ENCODE measurements at regions of chr9 and their contacts with region 1.

Region 1: DNA sequence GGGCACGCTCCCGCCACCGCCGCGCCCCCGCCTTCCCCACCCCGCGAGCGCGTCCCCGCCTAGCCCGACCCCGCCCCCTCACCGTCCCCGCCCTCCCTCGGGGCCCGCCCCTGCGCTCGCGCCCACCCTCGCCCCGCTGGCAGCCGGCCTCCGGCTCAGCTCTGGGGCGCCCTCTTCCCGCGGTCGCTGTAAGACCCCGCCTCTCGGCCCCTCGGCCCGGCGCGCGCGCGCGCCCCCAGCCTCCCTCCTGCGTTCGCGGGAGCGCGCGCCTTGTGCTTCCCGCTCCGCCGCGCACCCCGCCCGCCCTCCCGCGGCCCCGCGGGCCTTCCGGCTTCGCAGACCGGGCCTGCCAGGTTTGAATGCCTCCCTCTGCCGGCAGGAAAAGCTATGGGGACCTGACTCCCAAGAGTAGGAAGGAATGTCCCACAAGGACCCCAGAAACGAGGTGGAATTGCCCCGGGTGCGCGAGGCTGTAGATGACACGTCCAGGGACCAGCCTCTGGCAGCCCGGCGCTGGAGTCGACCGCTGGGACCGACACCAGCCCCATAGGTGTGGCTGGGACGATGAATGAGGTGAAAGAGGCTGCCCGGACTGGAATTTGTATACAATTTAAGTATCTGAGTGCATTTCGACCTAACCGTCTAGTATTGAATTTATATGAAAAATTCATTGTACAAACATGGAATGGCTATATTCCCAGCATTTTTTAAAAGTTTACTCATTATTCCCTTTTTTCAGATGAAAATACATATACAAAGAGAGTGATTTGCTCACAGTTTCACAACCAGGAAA is 416 bp upstream of the PTBP3 start:
- DNase-seq: peak; percentile 96
- H3K4me3 ChIP-seq: peak overlapping the region; percentile 79 to 99 (median 94)
- H3K27ac ChIP-seq: peak overlapping the region; percentile 95 to 100 (median 99)
- H3K4me1 ChIP-seq: peaks cover 11 to 30% (median 25%) of the 10 kb centered on the region in 4 donors
- H3K27me3 ChIP-seq: no peaks in the 10 kb centered on the region
- CTCF ChIP-seq: peak; percentile 55 to 74 (median 69)
- EP300 ChIP-seq: no peak
- POLR2A ChIP-seq: no peak

Region 2: DNA sequence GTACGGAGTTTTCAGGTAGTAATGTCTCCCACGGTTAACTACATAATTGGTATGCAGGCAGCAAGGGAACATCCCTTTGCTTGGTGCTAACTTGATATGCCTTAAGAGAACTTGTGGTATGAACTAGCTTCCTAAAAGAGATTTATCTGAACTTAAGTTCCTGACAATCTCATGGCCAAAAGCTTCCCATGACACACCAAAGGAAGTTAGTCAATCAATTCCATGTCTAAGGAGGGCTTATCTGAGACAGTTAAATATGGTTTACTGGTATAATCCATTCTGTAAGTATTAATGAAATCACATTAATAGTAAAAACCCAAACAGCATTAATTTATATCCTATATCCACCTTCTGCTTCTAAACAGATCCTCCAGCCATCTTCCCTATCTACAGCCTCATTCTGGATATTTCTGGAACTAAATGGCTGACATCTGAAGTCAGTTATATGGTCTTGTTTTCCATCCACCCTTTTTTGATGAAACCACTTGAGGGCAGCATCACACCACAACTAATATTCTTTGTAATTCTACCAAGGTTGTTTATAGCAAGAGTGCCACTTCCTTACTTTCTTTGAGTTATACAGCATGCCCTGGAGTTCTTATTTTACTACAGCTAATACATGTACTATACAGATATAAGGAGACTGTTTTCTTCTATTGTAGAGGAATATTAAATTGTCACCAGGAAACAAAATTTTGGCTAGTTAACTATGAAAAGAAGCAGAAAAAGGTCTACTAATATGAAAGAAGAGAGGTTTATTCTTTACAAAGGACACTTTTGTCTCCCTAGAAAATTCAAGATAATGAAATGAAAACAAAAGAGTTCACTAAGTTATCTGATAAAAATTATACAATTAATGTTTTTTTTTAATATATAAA is 573.8 kb before region 1 on chr9:
- intact Hi-C with region 1: loop called (anchors 10 kb)
- DNase-seq: no peak
- H3K4me3 ChIP-seq: no peak overlapping the region
- H3K27ac ChIP-seq: no peak overlapping the region
- H3K4me1 ChIP-seq: peaks cover 0 to 8% (median 0%) of the 10 kb centered on the region in 4 donors
- H3K27me3 ChIP-seq: no peaks in the 10 kb centered on the region
- CTCF ChIP-seq: peak; percentile 67 to 73 (median 72)
- EP300 ChIP-seq: no peak
- POLR2A ChIP-seq: no peak

Region 3: DNA sequence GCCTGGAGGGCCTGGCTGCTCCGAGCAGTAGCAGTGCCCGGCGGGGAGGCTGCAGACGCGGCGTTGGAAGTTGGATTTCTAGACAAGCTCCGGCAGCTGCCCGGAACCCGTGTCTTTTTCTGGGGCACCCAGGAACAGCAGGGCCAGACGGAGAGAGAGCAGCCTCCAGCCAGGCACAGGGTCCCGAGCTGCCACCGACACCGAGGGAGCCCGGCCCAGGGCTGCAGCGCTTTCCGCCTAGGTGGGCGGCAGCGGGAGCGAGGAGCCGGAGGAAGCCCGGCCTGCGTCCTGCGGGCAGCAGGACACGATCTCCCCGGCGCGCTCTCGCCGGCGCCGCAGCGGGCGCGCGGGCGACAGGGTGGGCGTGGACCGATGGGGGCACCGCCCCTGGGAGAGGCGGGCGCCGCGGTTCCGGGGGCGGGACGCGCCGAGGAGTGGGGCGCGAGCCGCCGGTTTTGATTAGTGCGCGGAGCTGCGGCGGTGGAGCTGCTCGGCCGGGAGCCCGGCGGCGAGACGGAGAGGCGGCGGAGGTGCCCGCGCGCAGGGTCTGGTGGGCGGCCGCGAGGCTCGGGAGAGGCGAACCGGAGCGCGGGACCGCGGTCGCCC is 437.4 kb before region 1 on chr9 and contains the start of gene UGCG:
- intact Hi-C with region 1: loop called (anchors 5 kb)
- DNase-seq: peak; percentile 95
- H3K4me3 ChIP-seq: peak within 1 kb of the TSS; percentile 83 to 99 (median 94)
- H3K27ac ChIP-seq: peak within 1 kb of the TSS; percentile 94 to 99 (median 97)
- H3K4me1 ChIP-seq: peaks cover 42 to 46% (median 44%) of the 10 kb centered on the region in 4 donors
- H3K27me3 ChIP-seq: no peaks in the 10 kb centered on the region
- CTCF ChIP-seq: no peak
- EP300 ChIP-seq: no peak
- POLR2A ChIP-seq: peak; percentile 94
- total RNA-seq, gene UGCG: 24.5 to 87.8 (median 33.5) TPM

Region 4: DNA sequence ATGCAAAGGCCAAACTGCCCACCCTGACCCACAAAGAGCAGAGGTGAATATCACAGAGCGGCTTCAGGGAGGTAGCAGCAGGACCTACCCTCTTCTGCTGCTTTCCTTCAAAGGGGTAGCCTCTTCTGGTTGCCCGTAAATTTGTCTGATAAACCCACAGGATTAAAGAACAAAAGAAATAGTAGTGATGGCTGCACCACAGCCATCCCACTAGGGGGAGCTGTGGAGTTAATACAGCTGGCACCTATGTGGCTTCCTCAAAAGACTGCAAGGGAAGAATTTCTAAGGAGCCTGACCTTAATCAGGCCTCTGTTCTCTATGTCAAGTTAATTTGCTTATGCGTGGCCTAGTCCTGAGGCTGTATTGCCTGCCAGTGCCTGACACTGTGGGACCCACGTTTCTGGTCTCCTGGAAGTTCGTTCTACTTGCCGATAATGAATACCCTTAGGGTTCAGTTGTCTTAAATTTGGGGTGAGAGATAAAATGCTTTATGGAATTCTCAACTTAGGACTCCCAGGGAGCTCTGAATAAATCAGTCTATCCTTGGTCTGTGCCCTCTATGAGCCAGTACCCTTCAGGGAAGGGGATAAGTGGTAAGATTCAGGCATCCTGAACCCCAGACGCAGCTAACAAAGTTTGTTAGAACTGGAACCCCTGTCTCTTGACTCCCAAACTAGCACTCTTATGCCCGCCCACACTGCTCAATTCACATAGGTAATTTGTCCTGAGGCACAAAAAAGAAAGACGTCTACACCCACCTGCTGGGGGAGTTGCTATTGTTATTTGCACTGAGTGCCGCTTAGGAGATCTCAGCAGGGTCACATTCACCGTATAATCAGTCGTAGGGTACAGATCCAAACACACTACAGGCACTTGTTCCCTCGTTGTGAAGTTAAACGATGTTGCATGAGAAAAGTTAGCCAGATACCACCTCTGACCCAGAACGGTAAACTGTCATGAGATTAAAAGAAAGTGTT is 235.8 kb before region 1 on chr9:
- intact Hi-C with region 1: loop called (anchors 5 kb)
- DNase-seq: peak; percentile 88
- H3K4me3 ChIP-seq: no peak overlapping the region
- H3K27ac ChIP-seq: no peak overlapping the region
- H3K4me1 ChIP-seq: no peaks in the 10 kb centered on the region
- H3K27me3 ChIP-seq: no peaks in the 10 kb centered on the region
- CTCF ChIP-seq: peak; percentile 77 to 94 (median 91)
- EP300 ChIP-seq: no peak
- POLR2A ChIP-seq: no peak

Region 5: GRCh38 chr9:112174218-112174964 is 159.4 kb before region 1 on chr9:
- intact Hi-C with region 1: loop called (anchors 10 kb)
- DNase-seq: no peak
- H3K4me3 ChIP-seq: peak overlapping the region; percentile 67 to 81 (median 72)
- H3K27ac ChIP-seq: peak overlapping the region in 1 of 4 donors; percentile 67
- H3K4me1 ChIP-seq: peaks cover 5 to 21% (median 18%) of the 10 kb centered on the region in 4 donors
- H3K27me3 ChIP-seq: peaks cover 0 to 18% (median 0%) of the 10 kb centered on the region in 4 donors
- CTCF ChIP-seq: no peak
- EP300 ChIP-seq: no peak
- POLR2A ChIP-seq: no peak

Region 6: GRCh38 chr9:112379177-112380101 is 45.6 kb after region 1 on chr9:
- intact Hi-C with region 1: loop called (anchors 5 kb)
- DNase-seq: peak; percentile 100
- H3K4me3 ChIP-seq: peak overlapping the region; percentile 65 to 99 (median 84)
- H3K27ac ChIP-seq: peak overlapping the region; percentile 95 to 99 (median 98)
- H3K4me1 ChIP-seq: peaks cover 39 to 61% (median 58%) of the 10 kb centered on the region in 4 donors
- H3K27me3 ChIP-seq: no peaks in the 10 kb centered on the region
- CTCF ChIP-seq: peak in 1 of 3 experiments; percentile 23
- EP300 ChIP-seq: no peak
- POLR2A ChIP-seq: peak; percentile 83

Region 7: DNA sequence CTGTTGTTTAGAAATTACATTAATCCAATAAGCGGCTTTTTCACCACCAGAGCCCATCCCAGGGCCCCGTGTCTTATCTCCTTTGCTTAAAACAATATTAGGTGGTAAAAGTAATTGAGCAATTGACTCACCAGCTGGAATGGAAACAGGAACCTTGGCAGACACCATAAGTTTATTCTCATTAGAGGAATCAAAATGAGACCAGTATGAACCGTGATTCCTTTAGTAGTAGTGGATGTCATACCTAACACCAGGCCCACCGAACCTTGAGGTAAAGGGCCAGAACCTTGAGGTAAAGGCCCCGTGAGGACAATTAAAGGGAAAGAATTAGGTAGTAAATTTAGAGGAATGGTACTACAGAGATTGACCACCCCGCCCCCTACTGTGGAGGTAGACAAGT is 62.6 kb after region 1 on chr9:
- intact Hi-C with region 1: no loop called
- DNase-seq: no peak
- H3K4me3 ChIP-seq: no peak overlapping the region
- H3K27ac ChIP-seq: no peak overlapping the region
- H3K4me1 ChIP-seq: no peaks in the 10 kb centered on the region
- H3K27me3 ChIP-seq: no peaks in the 10 kb centered on the region
- CTCF ChIP-seq: no peak
- EP300 ChIP-seq: no peak
- POLR2A ChIP-seq: no peak

Measured in esophagus muscularis mucosa (tissue), 4 donors.